Left cardiac atrium (tissue), 4 donors: ENCODE measurements at regions of chr1 and their contacts with region 1.

Region 1: GRCh38 chr1:234309598-234310459 is 63.4 kb upstream of the COA6 start:
- DNase-seq: peak; percentile 52
- ATAC-seq: peak; percentile 78

Region 2: DNA sequence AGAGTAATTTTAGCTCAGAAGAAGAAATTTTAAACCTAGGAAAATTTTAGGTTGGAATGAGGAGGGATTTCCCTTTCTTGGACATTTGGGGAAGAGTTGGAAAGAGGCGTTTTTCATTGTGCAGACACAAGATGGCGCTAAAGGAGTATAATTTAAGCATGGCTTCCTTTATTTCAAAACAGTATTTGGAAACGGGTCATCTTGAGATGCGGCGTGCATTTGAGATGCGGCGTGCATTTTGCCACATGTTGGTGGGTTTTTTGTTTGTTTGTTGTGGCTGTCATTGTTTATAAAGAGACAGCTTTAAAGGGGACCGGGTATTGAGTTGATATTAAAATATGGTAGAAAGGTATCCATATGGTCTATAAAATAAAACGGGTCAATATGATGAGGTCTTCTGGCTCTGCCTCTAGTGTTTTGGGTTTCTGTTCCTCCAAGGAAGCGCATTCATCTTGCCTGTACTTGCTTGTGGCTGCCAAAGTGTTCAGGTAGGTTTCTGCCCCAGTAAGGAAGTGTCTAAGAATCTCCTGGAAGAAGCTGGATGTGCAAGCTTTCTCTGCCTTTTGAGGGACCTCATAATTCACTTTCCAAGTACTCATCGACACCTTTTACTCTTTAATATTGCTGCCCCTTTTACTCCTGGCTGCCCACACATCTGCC is 195.1 kb before region 1 on chr1:
- intact Hi-C with region 1: loop called (anchors 10 kb)
- DNase-seq: no peak
- ATAC-seq: peak in 1 of 2 donors; percentile 41

Region 3: DNA sequence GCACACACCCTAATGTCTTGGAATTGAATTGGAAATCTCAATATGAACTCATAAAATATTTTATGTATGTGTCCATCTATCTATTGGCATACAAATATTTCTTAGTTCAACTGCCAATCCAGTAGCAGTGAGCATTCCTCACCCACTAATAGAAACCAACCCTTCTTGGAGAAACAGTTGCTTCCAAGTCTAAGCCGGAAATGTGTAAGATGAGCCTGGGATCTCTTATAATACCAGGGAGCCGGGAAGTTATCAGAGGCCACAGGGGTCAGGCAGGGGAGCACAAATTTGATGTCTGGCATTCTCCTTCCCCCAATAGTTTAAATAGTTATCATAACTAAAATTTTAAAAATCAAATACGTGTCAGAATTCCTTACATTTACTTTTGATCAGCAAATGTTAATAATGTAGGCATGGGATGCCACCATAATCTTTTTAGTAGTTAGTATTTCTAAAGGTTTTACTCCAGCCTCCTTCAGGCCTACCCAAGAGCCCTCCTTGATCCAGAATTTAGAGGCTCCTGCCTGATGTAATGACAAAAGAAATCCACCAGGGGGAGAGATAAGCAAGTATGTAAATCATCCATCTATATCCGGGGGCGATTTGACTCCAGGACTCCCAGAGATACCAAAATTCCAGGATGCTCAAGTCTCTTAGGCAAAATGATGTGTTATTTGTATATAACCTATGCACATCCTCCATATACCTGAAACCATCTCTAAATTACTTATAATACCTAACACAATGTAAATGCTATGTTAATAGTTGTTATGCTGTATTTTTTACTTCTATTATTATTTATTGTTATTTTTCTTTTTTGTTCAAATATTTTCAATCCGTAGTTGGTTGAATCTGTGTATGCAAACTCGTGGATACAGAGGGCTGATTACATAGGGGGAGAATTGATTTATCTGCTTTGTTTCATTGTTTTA is 155.2 kb before region 1 on chr1:
- intact Hi-C with region 1: loop called in 1 of 2 experiments (anchors 2 kb)
- DNase-seq: no peak
- ATAC-seq: peak in 1 of 2 donors; percentile 54

Region 4: DNA sequence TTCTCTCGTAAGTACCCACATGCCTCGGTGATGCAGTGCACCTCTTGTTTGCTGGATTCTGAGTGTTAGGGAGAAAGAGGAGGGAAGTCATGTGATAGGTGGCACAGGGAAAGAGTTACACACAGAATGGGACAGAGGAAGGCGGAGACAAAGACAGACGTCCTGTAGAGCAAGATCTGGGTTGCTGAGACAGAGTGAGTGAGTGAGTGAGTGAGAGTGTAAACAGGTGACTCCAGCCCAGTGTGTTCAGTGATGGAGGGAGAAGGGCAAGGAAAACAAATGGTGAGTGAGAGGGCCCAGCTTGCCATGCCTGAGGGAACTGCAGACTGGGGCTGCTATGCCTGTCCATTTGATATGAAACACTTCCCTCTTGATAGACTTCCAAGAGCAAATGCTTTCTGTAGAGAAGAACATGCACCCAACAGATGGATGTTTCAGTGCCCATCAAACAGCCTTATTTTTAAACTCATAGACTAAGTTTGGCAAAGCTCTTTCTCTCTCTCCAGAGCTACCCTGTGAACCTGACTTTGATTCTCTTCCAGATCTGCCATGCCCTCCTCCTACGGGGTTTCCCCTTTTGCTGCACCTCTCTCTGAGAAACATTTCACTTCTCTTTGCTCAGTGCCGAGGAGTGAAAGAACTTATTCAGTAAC is 146.4 kb before region 1 on chr1:
- intact Hi-C with region 1: loop called in 1 of 2 experiments (anchors 10 kb)
- DNase-seq: no peak
- ATAC-seq: no peak

Region 5: DNA sequence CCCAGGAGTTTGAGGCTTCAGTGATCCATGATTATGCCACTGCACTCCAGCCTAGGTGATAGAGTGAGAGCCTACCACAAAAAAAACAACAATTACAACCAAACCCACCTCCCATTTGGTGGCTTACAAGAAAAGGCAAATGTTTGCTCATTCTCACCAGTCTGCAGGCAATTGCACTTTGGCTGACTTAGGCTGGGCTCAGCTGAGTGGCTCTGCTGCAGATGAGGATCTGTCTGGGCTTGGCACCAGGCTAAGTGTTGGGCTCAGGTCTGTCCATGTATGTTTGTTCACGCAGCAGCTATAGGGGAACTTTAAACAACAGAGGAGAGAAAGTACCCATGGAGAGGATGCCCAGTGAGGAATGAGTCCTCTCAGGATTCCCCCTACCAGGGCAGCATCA is 35.4 kb after region 1 on chr1:
- intact Hi-C with region 1: no loop called
- DNase-seq: no peak
- ATAC-seq: no peak

Region 6: GRCh38 chr1:234355782-234356510 is 46.1 kb after region 1 on chr1:
- intact Hi-C with region 1: no loop called
- DNase-seq: no peak
- ATAC-seq: no peak